Mammary epithelial cell (primary cell): ENCODE measurements at regions of chr7 and their contacts with region 1.

Region 1: GRCh38 chr7:12747687-12748306 is 60.4 kb downstream of the ARL4A start:
- DNase-seq: peak; percentile 24
- H3K4me3 ChIP-seq: no peak overlapping the region
- H3K27ac ChIP-seq: no peak overlapping the region
- H3K4me1 ChIP-seq: no peaks in the 10 kb centered on the region
- H3K27me3 ChIP-seq: no peaks in the 10 kb centered on the region
- CTCF ChIP-seq: no peak

Region 2: DNA sequence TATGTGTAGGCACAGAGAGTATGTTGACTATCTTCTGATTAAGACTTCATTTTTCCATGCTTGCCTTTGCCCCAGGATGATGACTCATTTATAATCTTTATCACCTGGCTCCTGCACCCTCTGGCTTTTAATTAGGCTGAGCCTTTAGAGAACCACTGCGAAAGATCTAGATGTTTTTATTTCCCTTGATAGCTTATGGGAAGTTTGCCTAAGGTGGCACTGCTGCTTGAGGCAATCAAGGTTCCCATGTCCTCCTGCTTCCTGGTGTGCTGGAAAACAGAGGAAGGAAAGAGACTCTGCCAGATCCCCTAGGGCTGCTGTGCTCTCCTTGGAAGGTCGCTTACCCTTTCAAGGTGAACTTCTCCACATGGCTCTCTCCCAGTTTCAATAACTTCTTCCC is 54.3 kb after region 1 on chr7:
- CTCF ChIA-PET with region 1: no interaction called
- dilution Hi-C with region 1: no loop called
- in situ Hi-C with region 1: no loop called
- intact Hi-C with region 1: loop called (anchors 5 kb)
- DNase-seq: peak; percentile 47
- H3K4me3 ChIP-seq: no peak overlapping the region
- H3K27ac ChIP-seq: no peak overlapping the region
- H3K4me1 ChIP-seq: peaks cover 38% of the 10 kb centered on the region
- H3K27me3 ChIP-seq: no peaks in the 10 kb centered on the region
- CTCF ChIP-seq: no peak